ENCODE measurements at regions of chr13 and their contacts with region 1.

Region 1: GRCh38 chr13:111474136-111475002 is 153.9 kb downstream of the TEX29 start:
- DNase-seq: peak in 1 of 2 donors; percentile 83
- H3K4me3 ChIP-seq: no peak overlapping the region
- CTCF ChIP-seq: no peak
- POLR2A ChIP-seq: no peak

Region 2: GRCh38 chr13:111437856-111438547 is 36.4 kb before region 1 on chr13:
- intact Hi-C with region 1: no loop called
- DNase-seq: no peak
- H3K4me3 ChIP-seq: no peak overlapping the region
- CTCF ChIP-seq: no peak
- POLR2A ChIP-seq: no peak

Region 3: DNA sequence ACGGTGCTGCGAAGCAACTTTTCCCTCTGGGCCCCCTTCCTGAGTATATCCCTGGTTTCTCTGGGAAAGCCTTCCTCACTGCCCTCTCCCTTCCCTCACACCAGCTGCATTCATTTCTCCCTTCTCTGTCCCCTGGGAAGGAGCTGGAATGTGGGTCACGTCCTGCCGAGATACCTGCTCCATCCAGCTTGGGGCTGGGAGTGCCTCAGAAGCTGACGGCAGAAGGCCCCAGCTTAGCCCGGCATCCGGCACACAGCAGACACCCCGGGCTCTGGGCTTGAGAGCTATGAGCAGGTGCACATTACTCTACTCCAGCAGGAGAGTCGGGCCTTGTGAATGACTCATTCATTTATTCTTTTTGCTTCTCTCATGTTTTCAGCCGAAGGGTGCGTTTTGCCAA is 16.7 kb after region 1 on chr13:
- intact Hi-C with region 1: no loop called
- DNase-seq: peak in 1 of 2 donors; percentile 56
- H3K4me3 ChIP-seq: no peak overlapping the region
- CTCF ChIP-seq: no peak
- POLR2A ChIP-seq: no peak

Region 4: GRCh38 chr13:111518161-111518792 is 43.9 kb after region 1 on chr13:
- intact Hi-C with region 1: no loop called
- DNase-seq: peak in 1 of 2 donors; percentile 61
- H3K4me3 ChIP-seq: no peak overlapping the region
- CTCF ChIP-seq: no peak
- POLR2A ChIP-seq: no peak

Region 5: DNA sequence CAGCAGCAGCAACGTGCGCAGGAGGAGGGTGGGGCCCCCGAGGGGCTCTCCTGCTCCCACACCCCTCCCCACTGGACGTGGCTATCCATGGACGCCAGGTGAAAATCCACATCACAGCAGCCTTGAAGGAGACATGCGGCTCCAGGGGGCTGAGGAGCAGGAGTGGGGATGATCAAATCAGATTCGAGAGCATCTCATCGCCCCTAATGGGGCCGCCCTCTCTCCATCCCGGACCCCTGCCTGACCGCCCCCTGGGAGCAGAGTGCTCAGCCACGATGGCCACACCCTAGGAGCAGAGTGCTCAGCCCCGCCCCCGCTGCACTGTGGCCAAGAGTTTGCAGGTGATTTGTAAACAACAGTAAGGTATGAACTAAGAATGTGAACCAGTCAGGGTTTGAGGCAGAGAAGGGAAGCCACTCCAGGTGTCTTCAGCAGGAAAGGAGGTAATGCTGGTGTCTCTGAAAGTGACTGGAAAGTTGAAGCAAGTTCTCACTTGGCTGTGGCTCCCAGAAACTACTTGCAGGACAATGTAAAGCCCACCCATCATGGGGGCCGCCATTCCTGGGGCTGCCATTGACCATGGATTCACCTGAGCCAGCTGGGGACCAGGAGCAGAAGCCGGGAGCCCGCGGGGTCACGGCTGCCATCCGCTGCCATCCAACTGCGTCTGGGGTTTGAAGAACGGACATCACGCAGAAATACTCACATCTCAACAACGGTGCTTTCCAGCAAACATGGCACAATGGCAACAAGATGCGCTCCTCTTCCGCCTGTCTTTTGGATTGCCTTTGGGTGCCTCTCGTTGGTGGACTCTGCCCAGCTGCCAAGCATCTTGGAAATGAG is 973.6 kb after region 1 on chr13:
- intact Hi-C with region 1: loop called (anchors 5 kb)
- DNase-seq: peak in 1 of 2 donors; percentile 80
- H3K4me3 ChIP-seq: no peak overlapping the region
- CTCF ChIP-seq: no peak
- POLR2A ChIP-seq: no peak

Region 6: GRCh38 chr13:112606109-112607001 is 1132.0 kb after region 1 on chr13:
- intact Hi-C with region 1: loop called (anchors 10 kb)
- DNase-seq: peak; percentile 86 to 98
- H3K4me3 ChIP-seq: no peak overlapping the region
- CTCF ChIP-seq: peak in 1 of 3 donors; percentile 75
- POLR2A ChIP-seq: no peak